PC-3 (cell line): ENCODE measurements at regions of chr2 and their contacts with region 1.

Region 1: GRCh38 chr2:7203055-7203467 is 285.8 kb downstream of the RNF144A start:
- DNase-seq: peak; percentile 74
- ATAC-seq: peak; percentile 76
- H3K4me3 ChIP-seq: no peak overlapping the region
- H3K27ac ChIP-seq: no peak overlapping the region
- H3K4me1 ChIP-seq: no peaks in the 10 kb centered on the region
- H3K27me3 ChIP-seq: no peaks in the 10 kb centered on the region
- CTCF ChIP-seq: peak; percentile 97

Region 2: GRCh38 chr2:7363906-7364305 is 160.8 kb after region 1 on chr2:
- CTCF ChIA-PET with region 1: no interaction called
- POLR2A ChIA-PET with region 1: no interaction called
- intact Hi-C with region 1: loop called (anchors 1 kb)
- DNase-seq: peak; percentile 27
- ATAC-seq: no peak; the same call in 1 of the 2 replicates
- H3K4me3 ChIP-seq: no peak overlapping the region
- H3K27ac ChIP-seq: no peak overlapping the region
- H3K4me1 ChIP-seq: no peaks in the 10 kb centered on the region
- H3K27me3 ChIP-seq: no peaks in the 10 kb centered on the region
- CTCF ChIP-seq: peak; percentile 31; the same call in 1 of the 2 replicates

Region 3: DNA sequence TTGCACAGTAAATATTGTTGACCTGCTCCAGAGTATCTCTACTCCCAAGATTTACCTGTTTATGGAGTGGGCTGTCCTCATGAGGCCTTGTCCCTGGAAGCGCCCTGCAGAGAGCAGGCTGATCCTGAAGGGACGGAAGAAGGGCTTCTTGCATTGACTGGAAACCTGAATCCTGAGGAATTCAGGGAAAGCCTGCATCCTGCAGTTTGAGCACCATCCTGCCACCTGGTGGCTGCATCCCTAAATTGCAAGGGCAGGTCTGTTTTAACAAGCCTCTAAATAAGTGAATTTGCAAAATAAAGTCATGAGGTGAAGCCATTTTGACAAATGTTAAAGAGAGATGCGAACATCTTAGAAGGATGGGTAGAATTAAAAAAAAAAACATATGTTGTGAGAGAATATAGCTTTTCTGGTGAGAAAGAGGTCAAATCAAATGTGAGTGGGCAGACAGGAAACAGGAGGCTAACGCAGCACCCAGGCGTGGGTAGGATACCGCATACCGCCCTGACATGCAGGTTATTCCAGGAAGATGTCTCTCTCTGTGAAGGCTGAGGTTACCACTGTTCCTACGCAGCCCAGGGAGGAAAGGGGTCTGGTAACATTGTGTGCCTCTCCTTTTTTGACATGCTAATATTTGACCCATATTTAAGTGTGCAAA is 469.1 kb after region 1 on chr2:
- CTCF ChIA-PET with region 1: no interaction called
- POLR2A ChIA-PET with region 1: no interaction called
- intact Hi-C with region 1: loop called (anchors 1 kb)
- DNase-seq: peak; percentile 88
- ATAC-seq: peak; percentile 74
- H3K4me3 ChIP-seq: no peak overlapping the region
- H3K27ac ChIP-seq: no peak overlapping the region
- H3K4me1 ChIP-seq: 0 out of 2 replicates have a peak, but pooled peaks cover 6% of the 10 kb centered on the region
- H3K27me3 ChIP-seq: no peaks in the 10 kb centered on the region
- CTCF ChIP-seq: peak; percentile 92

Region 4: GRCh38 chr2:7692657-7693161 is 489.6 kb after region 1 on chr2:
- CTCF ChIA-PET with region 1: no interaction called
- POLR2A ChIA-PET with region 1: no interaction called
- intact Hi-C with region 1: loop called (anchors 1 kb)
- DNase-seq: peak; percentile 60
- ATAC-seq: no peak
- H3K4me3 ChIP-seq: no peak overlapping the region
- H3K27ac ChIP-seq: peak overlapping the region; percentile 46
- H3K4me1 ChIP-seq: peaks cover 24% of the 10 kb centered on the region
- H3K27me3 ChIP-seq: no peaks in the 10 kb centered on the region
- CTCF ChIP-seq: no peak